ENCODE measurements at regions of chr2 and their contacts with region 1.

Region 1: DNA sequence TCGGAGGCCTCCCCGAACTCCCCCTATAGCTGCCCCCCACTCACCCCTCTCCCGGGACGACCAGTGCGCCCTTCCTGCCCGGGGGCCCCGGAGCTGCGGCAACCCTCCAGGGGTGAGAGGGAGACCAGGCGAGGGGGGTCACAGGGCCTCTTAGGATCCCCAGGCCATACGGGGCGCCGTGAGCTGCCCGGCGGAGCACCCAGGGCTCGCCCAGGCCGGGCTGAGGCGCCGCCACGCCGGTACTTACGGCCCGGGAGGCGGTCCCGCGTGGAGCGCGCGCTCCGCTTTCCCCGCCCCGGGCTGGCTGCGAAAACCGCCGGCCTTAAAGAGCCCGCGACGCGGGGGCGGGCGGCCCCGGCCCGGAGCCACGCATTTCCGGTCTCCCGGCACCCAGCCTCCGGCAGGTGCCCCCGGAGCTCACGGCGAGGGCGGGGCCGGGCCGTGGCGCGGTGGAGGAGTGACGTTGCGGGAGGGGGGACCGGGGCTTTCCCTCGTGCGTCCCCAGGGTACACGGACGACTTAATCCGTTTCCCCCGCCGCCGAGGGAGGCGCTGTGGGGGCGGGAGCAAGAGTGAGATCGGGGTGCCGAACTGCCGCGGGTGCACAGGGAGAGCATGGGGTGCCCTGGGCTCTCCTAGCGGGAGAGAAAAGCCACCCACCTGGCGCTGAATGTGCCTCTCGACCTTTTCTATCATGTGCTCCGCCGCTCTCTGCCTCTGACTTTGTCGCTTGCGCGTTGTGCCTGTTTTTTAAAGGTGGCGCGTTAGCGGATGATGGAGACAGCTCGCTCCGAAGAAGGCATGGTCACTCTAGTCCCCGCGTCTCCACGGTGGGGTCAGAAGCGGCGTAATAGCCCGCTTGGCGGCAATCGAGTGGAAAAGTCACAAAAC is at the start of gene METTL21A:
- DNase-seq: peak; percentile 94
- total RNA-seq, gene METTL21A: 10.8 TPM

Region 2: DNA sequence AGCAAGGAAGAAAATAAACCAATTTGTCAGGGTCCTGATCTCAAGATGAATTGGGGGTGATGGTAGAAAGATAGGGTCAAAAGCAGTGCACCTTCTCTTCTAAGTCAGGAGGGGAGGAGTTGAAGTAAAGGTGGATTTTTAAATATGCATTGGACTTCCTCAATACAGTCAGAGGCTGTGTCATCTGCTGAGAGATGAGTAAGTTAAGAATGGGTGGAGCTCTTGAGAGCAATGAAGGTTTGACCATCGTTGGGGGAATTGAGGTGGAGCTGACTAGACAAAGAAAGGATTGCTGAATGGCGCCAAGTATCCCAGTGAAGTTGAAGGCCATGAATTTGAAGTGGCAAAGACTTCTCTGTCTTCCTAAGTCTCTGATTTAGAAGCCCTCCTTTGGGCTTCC is 704.3 kb before region 1 on chr2:
- intact Hi-C with region 1: no loop called
- DNase-seq: no peak

Region 3: DNA sequence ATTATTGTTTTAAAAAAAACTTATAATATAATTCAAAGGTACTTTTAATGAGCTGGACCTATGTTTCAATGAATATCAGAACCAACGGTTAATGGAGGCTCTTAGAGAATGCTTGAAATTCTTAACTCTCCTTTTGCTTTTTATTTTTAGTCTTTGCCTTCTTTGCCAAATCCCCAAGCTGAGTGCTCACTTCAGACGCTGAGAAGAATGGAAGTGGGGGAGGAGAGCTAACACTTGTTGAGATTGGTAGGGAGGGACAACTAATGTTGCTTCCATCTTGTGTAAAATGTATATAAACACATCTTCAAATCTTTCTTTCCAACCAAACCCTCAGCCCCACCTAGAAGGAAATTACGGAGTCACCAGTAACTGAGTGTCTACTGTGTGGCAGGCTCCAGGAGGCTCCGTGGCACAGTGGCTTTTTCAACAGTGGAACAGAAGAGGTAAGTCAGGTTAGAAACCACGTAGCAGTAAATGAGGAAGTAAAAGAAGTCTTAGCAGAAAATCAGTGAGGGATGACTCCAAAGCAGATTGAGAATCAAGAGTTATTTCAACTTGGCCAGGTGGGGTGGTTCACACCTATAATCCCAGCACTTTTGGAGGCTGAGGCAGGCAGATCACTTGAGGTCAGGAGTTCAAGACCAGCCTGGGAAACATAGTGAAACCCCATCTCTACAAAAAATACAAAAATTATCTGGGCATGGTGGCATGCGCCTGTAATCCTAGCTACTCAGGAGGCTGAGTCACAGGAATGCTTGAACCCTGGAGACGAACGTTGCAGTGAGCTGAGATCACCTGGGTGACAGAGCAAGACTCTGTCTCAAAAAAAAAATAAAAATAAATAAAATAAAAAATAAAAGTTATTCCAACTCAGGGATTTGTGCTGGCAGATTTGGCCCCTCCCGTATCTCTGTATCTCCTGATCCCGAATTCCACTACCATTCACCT is 140.5 kb before region 1 on chr2:
- intact Hi-C with region 1: loop called (anchors 5 kb)
- DNase-seq: no peak

Region 4: GRCh38 chr2:207529330-207530159 is 95.7 kb before region 1 on chr2 and contains the start of gene CREB1:
- intact Hi-C with region 1: loop called (anchors 2 kb)
- DNase-seq: peak; percentile 100
- total RNA-seq, gene CREB1: 46.9 TPM

Region 5: DNA sequence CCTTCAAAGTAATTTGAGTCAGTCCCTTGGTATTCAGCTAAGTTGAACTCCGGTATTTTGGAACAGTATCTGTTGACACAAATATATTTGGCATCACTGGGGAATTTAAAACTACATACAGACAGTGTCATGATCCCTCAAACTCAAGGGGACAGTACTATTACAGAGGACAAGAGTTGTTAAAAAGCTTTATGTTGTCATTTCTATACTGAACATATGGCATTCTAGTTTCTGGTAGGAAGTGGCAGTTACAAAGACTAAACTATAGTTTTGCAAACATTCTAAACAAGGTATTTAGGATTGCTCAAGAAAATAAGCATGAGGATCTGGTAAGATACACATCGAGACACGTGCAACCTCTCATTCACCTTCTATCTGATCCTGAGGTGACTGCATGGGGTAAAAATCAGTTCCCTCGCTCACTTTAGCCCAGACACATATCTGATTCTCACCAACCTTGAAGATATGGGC is 69.6 kb after region 1 on chr2:
- intact Hi-C with region 1: loop called (anchors 5 kb)
- DNase-seq: no peak

Region 6: GRCh38 chr2:207710814-207711740 is 85.8 kb after region 1 on chr2 and contains the start of gene CCNYL1:
- intact Hi-C with region 1: loop called (anchors 1 kb)
- DNase-seq: peak; percentile 100
- total RNA-seq, gene CCNYL1: 12.0 TPM

Region 7: DNA sequence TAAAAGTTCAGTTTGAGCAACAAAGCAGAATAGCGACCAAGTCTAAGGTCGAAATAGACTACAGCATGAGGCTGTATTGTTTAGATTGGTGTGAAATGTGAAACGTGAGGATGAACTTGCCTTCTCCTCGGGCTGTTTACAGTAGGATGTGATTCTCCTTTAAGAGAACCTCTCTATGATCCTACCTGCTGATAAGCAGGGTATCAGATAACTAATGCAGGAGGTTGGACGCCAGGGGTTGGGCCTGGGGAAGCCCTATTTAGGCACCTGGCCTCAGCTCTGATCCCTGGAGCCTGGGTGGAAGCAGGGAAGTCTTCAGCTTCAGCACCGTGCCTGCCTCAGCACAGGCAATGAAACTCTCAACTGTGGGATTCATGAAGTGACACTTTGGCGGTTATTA is 487.7 kb after region 1 on chr2:
- intact Hi-C with region 1: no loop called
- DNase-seq: no peak

Region 8: GRCh38 chr2:208254871-208255556 is 629.8 kb after region 1 on chr2 and contains the start of gene IDH1:
- intact Hi-C with region 1: loop called (anchors 5 kb)
- DNase-seq: peak; percentile 99
- total RNA-seq, gene IDH1: 17.7 TPM